Endothelial cell of umbilical vein (primary cell): ENCODE measurements at regions of chr1 and their contacts with region 1.

Region 1: GRCh38 chr1:40338745-40339424 is 21.8 kb upstream of the COL9A2 start:
- DNase-seq: peak; percentile 87
- H3K4me3 ChIP-seq: no peak overlapping the region
- H3K27ac ChIP-seq: no peak overlapping the region
- H3K4me1 ChIP-seq: no peaks in the 10 kb centered on the region
- H3K27me3 ChIP-seq: peaks cover 0 to 7% of the 10 kb centered on the region in 2 experiments
- CTCF ChIP-seq: peak; percentile 98 to 99
- POLR2A ChIP-seq: no peak

Region 2: DNA sequence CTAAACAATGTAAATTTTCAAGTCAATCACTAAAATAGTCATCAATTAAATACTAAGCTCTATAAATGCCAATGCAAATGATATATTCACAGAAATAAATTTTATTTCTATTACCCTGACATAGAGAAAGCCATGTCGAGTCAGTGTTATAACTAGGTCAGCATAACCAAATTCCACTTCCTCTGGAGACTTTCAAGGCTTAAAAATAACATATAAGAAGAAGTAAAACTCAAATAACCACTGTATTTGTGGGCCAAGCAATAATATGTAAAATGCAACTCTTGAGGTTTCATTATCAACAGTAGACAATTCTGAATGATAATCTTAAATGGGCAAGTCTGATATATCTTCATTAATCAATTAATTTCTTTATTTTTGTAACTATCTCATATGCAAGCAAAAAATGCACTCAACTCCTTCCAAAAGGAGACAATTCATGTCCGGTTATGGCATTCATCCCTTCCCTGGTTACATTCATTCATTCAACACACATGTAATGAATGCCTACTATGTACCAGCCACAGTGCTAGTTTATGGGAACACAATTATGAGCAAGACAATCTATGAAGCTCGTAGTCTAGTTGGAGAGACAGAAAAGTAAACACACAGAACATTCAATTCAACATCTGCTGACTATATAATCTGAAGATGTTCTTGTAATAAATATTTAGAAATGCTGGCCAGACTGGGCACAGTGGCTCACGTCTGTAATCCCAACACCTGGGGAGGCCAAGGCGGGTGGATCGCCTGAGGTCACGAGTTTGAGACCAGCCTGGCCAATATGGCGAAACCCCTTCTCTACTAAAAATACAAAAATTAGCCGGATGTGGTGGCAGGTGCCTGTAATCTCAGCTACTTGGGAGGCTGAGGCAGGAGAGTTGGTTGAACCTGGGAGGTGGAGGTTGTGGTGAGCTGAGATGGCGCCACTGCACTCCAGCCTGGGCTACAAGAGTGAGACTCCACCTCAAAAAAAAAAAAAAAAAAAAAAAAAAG is 335.4 kb before region 1 on chr1:
- CTCF ChIA-PET with region 1: no interaction called
- POLR2A ChIA-PET with region 1: no interaction called
- dilution Hi-C with region 1: no loop called
- intact Hi-C with region 1: no loop called
- DNase-seq: no peak
- H3K4me3 ChIP-seq: no peak overlapping the region
- H3K27ac ChIP-seq: no peak overlapping the region
- H3K4me1 ChIP-seq: no peaks in the 10 kb centered on the region
- H3K27me3 ChIP-seq: no peaks in the 10 kb centered on the region
- CTCF ChIP-seq: no peak
- POLR2A ChIP-seq: no peak

Region 3: DNA sequence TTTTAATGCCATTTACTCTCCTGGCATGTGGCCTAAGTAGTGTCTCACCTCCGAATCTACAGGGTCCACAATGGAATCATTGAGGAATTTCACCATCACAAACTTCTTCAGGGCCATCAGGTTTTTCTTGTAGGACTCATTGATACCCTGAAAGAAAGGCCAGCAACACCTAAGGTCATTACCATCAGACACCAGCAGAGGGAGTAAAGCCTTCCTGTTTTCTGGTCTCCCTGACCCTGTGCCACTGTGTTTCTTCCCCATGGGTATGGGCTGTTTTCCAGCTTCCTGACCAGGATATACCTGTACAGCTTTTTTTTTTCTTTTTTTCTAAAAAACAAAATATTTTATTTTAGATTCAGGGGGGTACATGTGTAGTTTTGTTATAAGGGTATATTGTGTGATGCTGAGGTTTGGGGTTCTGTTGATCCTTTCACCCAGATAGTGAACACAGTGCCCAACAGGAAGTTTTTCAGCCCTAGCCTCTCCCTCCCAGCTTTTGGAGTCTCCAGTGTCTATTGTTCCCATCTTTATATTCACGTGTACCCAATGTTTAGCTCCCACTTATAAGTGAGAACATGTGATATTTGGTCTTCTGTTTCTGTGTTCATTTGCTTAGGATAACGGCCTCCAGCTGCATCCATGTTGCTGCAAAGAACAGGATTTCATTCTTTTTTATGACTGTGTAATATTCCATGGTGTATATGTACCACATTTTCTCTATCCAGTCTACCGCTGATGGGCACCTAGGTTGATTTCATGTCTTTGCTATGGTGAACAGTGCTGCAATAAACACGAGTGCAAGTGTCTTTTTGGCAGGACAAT is 260.2 kb before region 1 on chr1:
- CTCF ChIA-PET with region 1: interaction called, 148 read pairs
- POLR2A ChIA-PET with region 1: no interaction called
- dilution Hi-C with region 1: no loop called
- intact Hi-C with region 1: no loop called
- DNase-seq: peak; percentile 60
- H3K4me3 ChIP-seq: no peak overlapping the region
- H3K27ac ChIP-seq: no peak overlapping the region
- H3K4me1 ChIP-seq: no peaks in the 10 kb centered on the region
- H3K27me3 ChIP-seq: no peaks in the 10 kb centered on the region
- CTCF ChIP-seq: peak; percentile 63 to 78
- POLR2A ChIP-seq: no peak

Region 4: DNA sequence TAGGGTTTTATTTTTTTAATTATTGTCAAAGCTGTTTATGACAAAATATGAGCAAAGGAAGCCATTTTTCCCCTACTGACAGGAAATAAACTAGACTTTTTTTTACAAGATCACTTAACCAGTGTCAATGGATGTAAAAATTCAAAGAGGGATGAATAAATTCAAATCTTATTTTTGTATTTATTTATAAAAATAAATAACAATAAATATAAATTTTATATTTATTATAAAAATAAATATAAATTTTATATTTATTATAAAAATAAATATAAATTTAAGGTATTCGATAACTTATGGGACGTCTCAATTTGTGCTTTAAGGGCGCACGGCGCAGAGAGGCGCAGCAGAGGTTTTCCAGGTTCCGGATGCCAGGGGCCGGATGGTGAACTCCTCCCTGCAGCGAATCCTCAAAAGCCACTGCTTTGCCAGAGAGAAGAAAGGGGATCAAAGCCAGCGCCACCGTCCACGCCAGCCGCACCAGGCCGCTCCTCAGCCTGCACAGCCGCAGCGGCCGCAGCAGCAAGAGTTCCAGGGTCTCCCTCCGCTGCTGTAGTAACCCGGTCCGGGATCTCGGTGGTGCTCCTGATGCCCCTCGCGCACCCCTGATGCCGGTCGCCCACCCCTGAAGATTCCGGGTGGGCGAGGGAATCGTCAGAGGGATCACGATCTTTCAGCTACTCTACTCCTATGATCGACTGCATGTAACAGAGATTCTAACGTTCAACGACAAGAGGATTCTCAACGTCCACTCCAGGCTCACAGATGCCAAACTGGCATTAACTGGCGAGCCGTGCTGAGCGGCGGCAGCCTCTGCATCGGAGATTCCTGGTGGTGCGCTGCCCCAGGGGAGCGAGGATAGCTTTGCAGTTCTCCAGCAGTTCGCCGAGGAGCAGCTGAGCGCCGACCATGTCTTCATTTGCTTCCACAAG is 206.2 kb before region 1 on chr1:
- CTCF ChIA-PET with region 1: interaction called, 12 read pairs
- POLR2A ChIA-PET with region 1: no interaction called
- dilution Hi-C with region 1: no loop called
- intact Hi-C with region 1: no loop called
- DNase-seq: peak; percentile 33
- H3K4me3 ChIP-seq: peak overlapping the region in 2 of 3 experiments; percentile 32 to 35
- H3K27ac ChIP-seq: no peak overlapping the region
- H3K4me1 ChIP-seq: peaks cover 13% of the 10 kb centered on the region
- H3K27me3 ChIP-seq: peaks cover 13 to 25% of the 10 kb centered on the region in 2 experiments
- CTCF ChIP-seq: no peak
- POLR2A ChIP-seq: no peak

Region 5: GRCh38 chr1:40291293-40291692 is 47.6 kb before region 1 on chr1:
- CTCF ChIA-PET with region 1: interaction called, 12 read pairs
- POLR2A ChIA-PET with region 1: no interaction called
- dilution Hi-C with region 1: no loop called
- intact Hi-C with region 1: no loop called
- DNase-seq: no peak
- H3K4me3 ChIP-seq: no peak overlapping the region
- H3K27ac ChIP-seq: no peak overlapping the region
- H3K4me1 ChIP-seq: no peaks in the 10 kb centered on the region
- H3K27me3 ChIP-seq: no peaks in the 10 kb centered on the region
- CTCF ChIP-seq: no peak
- POLR2A ChIP-seq: no peak

Region 6: DNA sequence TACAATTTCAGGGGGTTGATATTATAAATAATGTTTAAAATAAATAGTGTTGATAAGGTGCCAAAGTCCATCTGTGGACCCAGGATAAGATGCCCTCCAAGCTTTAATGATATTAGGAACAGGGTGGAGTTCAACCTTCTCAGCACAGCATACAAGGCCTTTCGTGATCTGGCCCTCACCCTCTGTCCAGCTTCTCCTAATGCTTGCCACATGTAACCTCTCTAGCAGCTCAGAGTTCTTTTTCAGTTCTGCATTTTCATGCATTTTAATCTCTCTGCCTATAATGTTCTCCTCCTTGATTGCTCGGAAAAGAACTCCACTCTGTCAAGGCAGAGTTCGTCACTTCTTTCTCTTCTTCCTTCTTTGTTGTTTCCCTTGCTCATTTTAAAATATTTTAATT is 13.2 kb after region 1 on chr1:
- CTCF ChIA-PET with region 1: interaction called, 46 read pairs
- POLR2A ChIA-PET with region 1: no interaction called
- dilution Hi-C with region 1: no loop called
- intact Hi-C with region 1: no loop called
- DNase-seq: no peak
- H3K4me3 ChIP-seq: no peak overlapping the region
- H3K27ac ChIP-seq: no peak overlapping the region
- H3K4me1 ChIP-seq: no peaks in the 10 kb centered on the region
- H3K27me3 ChIP-seq: peaks cover 0 to 1% of the 10 kb centered on the region in 2 experiments
- CTCF ChIP-seq: no peak
- POLR2A ChIP-seq: no peak

Region 7: DNA sequence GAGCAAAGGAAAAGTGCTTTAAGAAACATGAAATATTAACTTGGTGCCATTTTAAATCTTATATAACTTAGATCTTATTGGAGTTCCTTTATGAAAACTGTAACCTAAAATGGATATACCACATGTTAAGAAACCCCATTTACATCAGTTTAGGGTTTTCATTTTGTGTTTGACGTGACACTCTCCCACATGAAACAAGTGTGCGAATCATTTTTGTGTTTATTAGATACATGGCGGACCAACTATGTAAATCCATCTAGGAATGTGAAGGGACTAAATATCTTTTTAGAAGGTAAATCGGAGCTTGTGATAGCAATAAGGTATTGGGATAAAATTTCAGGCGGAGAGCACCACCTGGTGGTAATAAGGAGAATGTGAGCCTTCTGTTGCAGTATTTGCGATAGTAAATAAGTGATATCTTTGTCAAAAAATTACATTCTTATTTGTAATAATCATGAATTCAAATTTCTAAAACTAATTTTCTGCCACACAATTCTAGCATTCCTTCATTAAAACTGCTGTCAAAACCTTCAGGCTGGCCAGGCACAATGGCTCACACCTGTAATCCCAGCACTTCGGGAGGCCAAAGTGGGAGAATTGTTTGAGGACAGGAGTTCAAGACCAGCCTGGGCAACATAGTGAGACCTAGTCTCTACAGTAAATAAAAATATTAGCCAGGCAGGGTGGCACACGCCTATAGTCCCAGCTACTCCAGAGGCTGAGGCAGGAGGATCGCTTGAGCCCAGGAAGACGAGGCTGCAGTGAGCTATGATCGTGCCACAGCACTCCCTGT is 66.0 kb after region 1 on chr1:
- CTCF ChIA-PET with region 1: interaction called, 103 read pairs
- POLR2A ChIA-PET with region 1: no interaction called
- dilution Hi-C with region 1: no loop called
- intact Hi-C with region 1: loop called (anchors 1 kb)
- DNase-seq: peak; percentile 75
- H3K4me3 ChIP-seq: no peak overlapping the region
- H3K27ac ChIP-seq: no peak overlapping the region
- H3K4me1 ChIP-seq: no peaks in the 10 kb centered on the region
- H3K27me3 ChIP-seq: no peaks in the 10 kb centered on the region
- CTCF ChIP-seq: peak; percentile 56 to 62
- POLR2A ChIP-seq: no peak

Region 8: DNA sequence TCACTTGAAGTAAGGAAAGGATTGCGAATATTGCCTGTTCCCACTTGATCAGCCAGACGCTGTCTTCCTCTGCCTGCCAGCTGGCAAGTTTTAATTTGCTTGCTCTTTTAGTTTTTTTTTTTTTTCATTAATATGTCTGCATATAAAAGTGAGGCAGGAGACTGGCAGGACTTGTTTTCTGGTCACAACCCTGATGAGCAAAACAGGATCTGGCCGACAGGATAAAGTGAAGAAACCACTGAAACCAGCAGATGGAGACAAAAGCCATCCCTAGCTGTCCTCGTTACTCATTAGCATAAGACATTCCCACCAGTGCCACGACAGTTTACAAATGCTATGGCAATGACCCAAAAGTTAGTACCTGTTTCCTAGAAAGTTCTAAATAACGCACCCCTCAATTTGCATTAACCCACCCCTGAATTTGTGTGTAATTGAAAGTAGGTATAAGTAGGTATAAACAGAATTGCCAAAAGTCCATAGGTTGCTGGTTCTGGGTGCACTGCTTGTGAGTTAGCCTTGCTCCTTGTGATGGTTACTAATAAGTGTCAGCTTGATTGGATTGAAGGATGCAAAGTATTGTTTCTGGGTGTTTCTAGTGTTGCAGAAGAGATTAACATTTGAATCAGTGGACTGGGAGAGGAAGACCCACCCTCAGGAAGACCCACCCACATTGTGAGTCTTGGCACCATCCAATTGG is 253.4 kb after region 1 on chr1:
- CTCF ChIA-PET with region 1: no interaction called
- POLR2A ChIA-PET with region 1: no interaction called
- dilution Hi-C with region 1: no loop called
- intact Hi-C with region 1: no loop called
- DNase-seq: peak; percentile 47
- H3K4me3 ChIP-seq: no peak overlapping the region
- H3K27ac ChIP-seq: no peak overlapping the region
- H3K4me1 ChIP-seq: no peaks in the 10 kb centered on the region
- H3K27me3 ChIP-seq: peaks cover 0 to 4% of the 10 kb centered on the region in 2 experiments
- CTCF ChIP-seq: peak; percentile 19 to 48
- POLR2A ChIP-seq: no peak

Region 9: DNA sequence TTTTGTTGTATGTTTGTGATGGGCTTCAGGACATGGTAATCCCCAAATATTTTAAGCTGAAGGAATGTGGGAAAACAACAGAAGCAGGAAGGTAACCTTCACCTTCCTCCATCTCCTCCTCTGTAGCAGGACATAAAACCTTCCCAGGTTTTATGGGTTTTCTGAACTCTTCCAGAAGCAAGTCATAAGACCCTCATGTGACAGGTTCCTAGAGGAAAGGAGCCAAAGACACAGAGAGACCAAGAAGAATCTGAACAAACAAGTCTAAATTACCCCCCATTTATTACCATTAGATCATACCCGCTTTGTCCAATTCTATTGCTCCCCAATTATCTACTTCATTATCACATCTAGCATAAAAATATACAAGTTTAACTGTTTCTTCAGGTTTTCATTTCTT is 874.5 kb after region 1 on chr1:
- CTCF ChIA-PET with region 1: no interaction called
- POLR2A ChIA-PET with region 1: no interaction called
- dilution Hi-C with region 1: no loop called
- intact Hi-C with region 1: no loop called
- DNase-seq: peak; percentile 28
- H3K4me3 ChIP-seq: no peak overlapping the region
- H3K27ac ChIP-seq: no peak overlapping the region
- H3K4me1 ChIP-seq: no peaks in the 10 kb centered on the region
- H3K27me3 ChIP-seq: no peaks in the 10 kb centered on the region
- CTCF ChIP-seq: no peak
- POLR2A ChIP-seq: no peak